Mammary epithelial cell (primary cell): ENCODE measurements at regions of chr13 and their contacts with region 1.

Region 1: GRCh38 chr13:101127741-101128353 is 288.5 kb downstream of the NALCN start:
- DNase-seq: peak; percentile 23
- H3K4me3 ChIP-seq: no peak overlapping the region
- H3K27ac ChIP-seq: no peak overlapping the region
- H3K4me1 ChIP-seq: no peaks in the 10 kb centered on the region
- H3K27me3 ChIP-seq: no peaks in the 10 kb centered on the region
- CTCF ChIP-seq: peak; percentile 72 to 84

Region 2: DNA sequence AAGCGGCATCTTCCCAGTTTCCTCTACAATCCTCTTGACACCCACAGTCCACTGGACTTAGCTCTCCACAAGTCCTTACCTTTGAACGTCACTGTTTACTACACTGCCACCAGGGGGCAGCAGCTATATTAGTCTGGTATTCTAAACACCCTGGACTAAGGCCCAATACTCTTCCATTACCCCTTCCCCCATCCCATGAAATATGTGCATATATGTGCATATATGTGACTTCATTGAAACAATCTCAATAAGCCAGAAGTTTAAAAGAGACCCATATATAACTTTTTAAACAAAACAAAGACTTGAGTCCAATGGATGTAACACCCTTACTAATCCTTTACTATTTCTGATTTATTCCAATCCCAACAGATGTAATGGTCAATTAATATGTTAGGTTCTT is 554.7 kb before region 1 on chr13:
- CTCF ChIA-PET with region 1: interaction called, 4 read pairs
- dilution Hi-C with region 1: no loop called
- in situ Hi-C with region 1: loop called (anchors 25 kb)
- intact Hi-C with region 1: loop called (anchors 2 kb)
- DNase-seq: peak; percentile 51
- H3K4me3 ChIP-seq: no peak overlapping the region
- H3K27ac ChIP-seq: no peak overlapping the region
- H3K4me1 ChIP-seq: no peaks in the 10 kb centered on the region
- H3K27me3 ChIP-seq: peaks cover 2% of the 10 kb centered on the region
- CTCF ChIP-seq: peak; percentile 76 to 85

Region 3: GRCh38 chr13:100721885-100722512 is 405.8 kb before region 1 on chr13:
- CTCF ChIA-PET with region 1: no interaction called
- dilution Hi-C with region 1: no loop called
- in situ Hi-C with region 1: loop called in 1 of 2 experiments (anchors 10 kb)
- intact Hi-C with region 1: loop called (anchors 5 kb)
- DNase-seq: peak; percentile 12
- H3K4me3 ChIP-seq: no peak overlapping the region
- H3K27ac ChIP-seq: no peak overlapping the region
- H3K4me1 ChIP-seq: no peaks in the 10 kb centered on the region
- H3K27me3 ChIP-seq: no peaks in the 10 kb centered on the region
- CTCF ChIP-seq: peak; percentile 72 to 79

Region 4: GRCh38 chr13:101013245-101013644 is 114.6 kb before region 1 on chr13:
- CTCF ChIA-PET with region 1: no interaction called
- dilution Hi-C with region 1: no loop called
- in situ Hi-C with region 1: loop called in 1 of 2 experiments (anchors 25 kb)
- intact Hi-C with region 1: loop called (anchors 1 kb)
- DNase-seq: peak; percentile 1
- H3K4me3 ChIP-seq: no peak overlapping the region
- H3K27ac ChIP-seq: no peak overlapping the region
- H3K4me1 ChIP-seq: no peaks in the 10 kb centered on the region
- H3K27me3 ChIP-seq: no peaks in the 10 kb centered on the region
- CTCF ChIP-seq: peak in 1 of 2 donors; percentile 16

Region 5: GRCh38 chr13:101098873-101099272 is 29.0 kb before region 1 on chr13:
- CTCF ChIA-PET with region 1: interaction called, 4 read pairs
- dilution Hi-C with region 1: no loop called
- in situ Hi-C with region 1: no loop called
- intact Hi-C with region 1: loop called (anchors 2 kb)
- DNase-seq: no peak
- H3K4me3 ChIP-seq: no peak overlapping the region
- H3K27ac ChIP-seq: no peak overlapping the region
- H3K4me1 ChIP-seq: no peaks in the 10 kb centered on the region
- H3K27me3 ChIP-seq: no peaks in the 10 kb centered on the region
- CTCF ChIP-seq: no peak

Region 6: GRCh38 chr13:101144808-101145419 is 17.1 kb after region 1 on chr13:
- CTCF ChIA-PET with region 1: no interaction called
- dilution Hi-C with region 1: no loop called
- in situ Hi-C with region 1: no loop called
- intact Hi-C with region 1: no loop called
- DNase-seq: peak; percentile 30
- H3K4me3 ChIP-seq: no peak overlapping the region
- H3K27ac ChIP-seq: no peak overlapping the region
- H3K4me1 ChIP-seq: no peaks in the 10 kb centered on the region
- H3K27me3 ChIP-seq: no peaks in the 10 kb centered on the region
- CTCF ChIP-seq: peak; percentile 51 to 63

Region 7: GRCh38 chr13:101757446-101758039 is 629.7 kb after region 1 on chr13:
- CTCF ChIA-PET with region 1: no interaction called
- dilution Hi-C with region 1: no loop called
- in situ Hi-C with region 1: loop called in 1 of 2 experiments (anchors 25 kb)
- intact Hi-C with region 1: no loop called
- DNase-seq: peak; percentile 42
- H3K4me3 ChIP-seq: no peak overlapping the region
- H3K27ac ChIP-seq: no peak overlapping the region
- H3K4me1 ChIP-seq: no peaks in the 10 kb centered on the region
- H3K27me3 ChIP-seq: peaks cover 4% of the 10 kb centered on the region
- CTCF ChIP-seq: peak; percentile 42 to 63